ENCODE measurements at regions of chr12 and their contacts with region 1.

Region 1: GRCh38 chr12:25130741-25131188 is 64.2 kb downstream of the DNAI7 start:
- DNase-seq: peak; percentile 22
- ATAC-seq: no peak; the same call in 1 of the 2 replicates
- H3K4me3 ChIP-seq: no peak overlapping the region
- H3K27ac ChIP-seq: no peak overlapping the region
- H3K4me1 ChIP-seq: no peaks in the 10 kb centered on the region
- H3K27me3 ChIP-seq: no peaks in the 10 kb centered on the region
- CTCF ChIP-seq: peak; percentile 39 to 63 (median 49); a peak in 4 of 6 replicates
- POLR2A ChIP-seq: no peak
- RAD21 ChIP-seq: peak; percentile 67

Region 2: GRCh38 chr12:24852420-24852819 is 278.3 kb before region 1 on chr12:
- CTCF ChIA-PET with region 1: no interaction called
- POLR2A ChIA-PET with region 1: no interaction called
- RAD21 ChIA-PET with region 1: no interaction called
- intact Hi-C with region 1: loop called (anchors 2 kb)
- DNase-seq: no peak
- ATAC-seq: no peak
- H3K4me3 ChIP-seq: no peak overlapping the region
- H3K27ac ChIP-seq: no peak overlapping the region
- H3K4me1 ChIP-seq: no peaks in the 10 kb centered on the region
- H3K27me3 ChIP-seq: peaks cover 8% of the 10 kb centered on the region; the same call in 1 of the 2 replicates
- CTCF ChIP-seq: peak; percentile 8 to 55 (median 34); a peak in 4 of 6 replicates
- POLR2A ChIP-seq: no peak
- RAD21 ChIP-seq: peak; percentile 12; the same call in 1 of the 2 replicates

Region 3: GRCh38 chr12:24960222-24960855 is 170.4 kb before region 1 on chr12:
- CTCF ChIA-PET with region 1: no interaction called
- POLR2A ChIA-PET with region 1: no interaction called
- RAD21 ChIA-PET with region 1: no interaction called
- intact Hi-C with region 1: loop called (anchors 1 kb)
- DNase-seq: peak; percentile 36
- ATAC-seq: peak; percentile 98
- H3K4me3 ChIP-seq: no peak overlapping the region
- H3K27ac ChIP-seq: no peak overlapping the region
- H3K4me1 ChIP-seq: no peaks in the 10 kb centered on the region
- H3K27me3 ChIP-seq: no peaks in the 10 kb centered on the region
- CTCF ChIP-seq: peak; percentile 51 to 74 (median 70); a peak in 5 of 6 replicates
- POLR2A ChIP-seq: no peak
- RAD21 ChIP-seq: peak; percentile 64

Region 4: GRCh38 chr12:25074954-25075353 is 55.8 kb before region 1 on chr12:
- CTCF ChIA-PET with region 1: no interaction called
- POLR2A ChIA-PET with region 1: no interaction called
- RAD21 ChIA-PET with region 1: no interaction called
- intact Hi-C with region 1: no loop called
- DNase-seq: no peak
- ATAC-seq: no peak
- H3K4me3 ChIP-seq: no peak overlapping the region
- H3K27ac ChIP-seq: no peak overlapping the region
- H3K4me1 ChIP-seq: no peaks in the 10 kb centered on the region
- H3K27me3 ChIP-seq: no peaks in the 10 kb centered on the region
- CTCF ChIP-seq: no peak
- POLR2A ChIP-seq: no peak
- RAD21 ChIP-seq: no peak

Region 5: DNA sequence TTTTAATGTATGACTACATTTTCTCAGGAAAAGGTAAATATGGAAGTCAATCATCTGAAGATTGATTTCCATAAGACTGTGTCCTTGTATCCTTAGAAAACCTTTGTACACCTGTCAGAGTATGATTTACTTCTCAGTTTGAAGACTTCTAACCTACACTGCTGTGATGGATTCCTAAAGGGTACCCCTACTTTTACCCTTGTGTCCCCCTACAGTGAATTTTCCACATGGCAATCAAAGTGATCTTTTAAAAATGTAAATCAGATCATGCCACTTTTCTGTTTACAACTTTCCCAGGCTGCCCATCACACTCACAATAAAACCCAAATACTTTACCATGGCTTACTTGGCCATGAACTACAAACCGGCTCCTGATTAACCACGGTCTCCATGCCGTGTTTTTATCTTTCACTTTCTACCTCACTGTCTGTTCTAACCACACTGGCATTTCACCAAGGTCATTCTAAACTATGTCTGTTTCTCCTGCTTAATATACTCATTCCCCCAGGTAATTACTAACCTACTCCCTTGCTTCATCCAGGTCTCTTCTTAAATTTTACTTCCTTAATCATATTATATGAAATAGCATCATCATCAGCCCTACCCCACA is 56.1 kb after region 1 on chr12:
- CTCF ChIA-PET with region 1: no interaction called
- POLR2A ChIA-PET with region 1: no interaction called
- RAD21 ChIA-PET with region 1: no interaction called
- intact Hi-C with region 1: no loop called
- DNase-seq: no peak
- ATAC-seq: no peak
- H3K4me3 ChIP-seq: no peak overlapping the region
- H3K27ac ChIP-seq: no peak overlapping the region
- H3K4me1 ChIP-seq: peaks cover 18 to 23% of the 10 kb centered on the region in 2 experiments
- H3K27me3 ChIP-seq: no peaks in the 10 kb centered on the region
- CTCF ChIP-seq: no peak
- POLR2A ChIP-seq: no peak
- RAD21 ChIP-seq: no peak

Measured in HCT116 (cell line).